ENCODE measurements at regions of chr10 and their contacts with region 1.

Region 1: DNA sequence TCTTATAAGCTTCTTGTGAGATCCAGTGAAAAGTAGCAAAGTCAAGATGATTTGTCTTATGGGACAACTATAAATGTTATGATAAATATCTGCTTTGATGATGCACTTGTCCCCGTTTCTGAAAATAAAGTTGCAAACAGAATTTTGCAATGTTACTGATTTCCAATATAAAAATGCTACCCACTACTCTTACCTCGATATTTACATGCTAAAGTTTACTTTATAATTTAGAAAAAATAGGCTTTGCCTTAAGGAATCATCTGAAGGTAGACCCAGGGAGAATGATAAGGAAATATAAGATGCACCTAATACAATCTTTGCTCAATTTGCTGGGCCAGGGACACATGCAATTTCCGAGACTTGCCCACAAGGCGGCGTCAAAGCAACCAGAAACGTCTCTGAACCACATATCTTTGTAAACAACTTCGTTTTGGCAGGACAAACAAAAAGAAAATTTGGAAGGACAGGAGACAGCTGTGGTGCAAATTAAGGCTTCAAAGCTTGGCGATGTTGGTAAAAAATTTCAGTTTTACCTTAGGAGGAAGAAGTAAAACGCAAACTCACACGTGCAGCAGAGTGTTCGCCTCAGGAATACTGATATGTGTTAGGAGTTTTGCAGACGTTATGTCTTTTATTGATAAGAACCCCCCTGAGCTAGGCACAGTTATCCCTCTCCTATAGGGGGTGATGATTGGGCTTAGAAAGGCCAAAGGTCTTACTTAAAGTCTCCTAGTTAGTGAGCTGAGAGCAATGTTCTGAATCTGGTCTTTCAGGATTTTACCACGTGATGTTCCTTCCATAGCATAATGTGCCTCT is 134.4 kb downstream of the PRKCQ start:
- ATAC-seq: peak in 3 of 8 experiments; percentile 39 to 45 (median 39)
- H3K4me3 ChIP-seq: no peak overlapping the region
- H3K27ac ChIP-seq: no peak overlapping the region
- H3K4me1 ChIP-seq: no peaks in the 10 kb centered on the region

Region 2: DNA sequence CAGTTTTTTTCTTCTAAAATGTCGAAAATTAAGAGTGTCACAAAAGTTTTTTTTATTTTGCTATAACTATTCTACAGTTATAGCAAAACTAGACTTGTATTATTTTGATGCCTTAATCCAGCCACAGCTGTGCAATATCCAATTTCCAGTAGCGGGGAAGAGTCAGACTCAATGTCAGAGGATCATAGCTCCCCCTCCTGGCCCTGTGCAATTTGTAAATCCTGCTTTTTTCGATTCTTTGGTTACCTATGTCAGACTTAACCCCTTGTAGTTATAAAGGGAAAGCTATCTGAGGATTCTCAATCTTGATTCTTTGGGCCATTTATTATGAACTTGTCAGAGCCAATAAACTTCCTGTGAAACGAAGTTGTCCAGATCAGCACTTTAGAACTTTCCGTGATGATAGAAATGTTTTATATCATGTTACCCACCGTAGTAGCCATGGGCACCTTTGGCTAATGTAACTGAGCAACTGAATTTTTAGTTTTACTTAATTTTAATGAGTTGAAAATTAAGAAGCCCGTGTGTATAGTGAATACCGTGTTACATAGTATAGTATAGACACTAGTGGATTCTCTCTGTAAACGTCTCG is 222.1 kb after region 1 on chr10:
- in situ Hi-C with region 1: loop called in 3 of 9 experiments (anchors 25 kb)
- ATAC-seq: peak; percentile 42 to 78 (median 58)
- H3K4me3 ChIP-seq: no peak overlapping the region
- H3K27ac ChIP-seq: no peak overlapping the region
- H3K4me1 ChIP-seq: peaks cover 2 to 6% of the 10 kb centered on the region in 2 donors

Region 3: GRCh38 chr10:6678211-6678803 is 232.6 kb after region 1 on chr10:
- in situ Hi-C with region 1: loop called in 4 of 9 experiments (anchors 25 kb)
- ATAC-seq: peak in 4 of 8 experiments; percentile 40 to 72 (median 60)
- H3K4me3 ChIP-seq: no peak overlapping the region
- H3K27ac ChIP-seq: no peak overlapping the region
- H3K4me1 ChIP-seq: no peaks in the 10 kb centered on the region

Region 4: DNA sequence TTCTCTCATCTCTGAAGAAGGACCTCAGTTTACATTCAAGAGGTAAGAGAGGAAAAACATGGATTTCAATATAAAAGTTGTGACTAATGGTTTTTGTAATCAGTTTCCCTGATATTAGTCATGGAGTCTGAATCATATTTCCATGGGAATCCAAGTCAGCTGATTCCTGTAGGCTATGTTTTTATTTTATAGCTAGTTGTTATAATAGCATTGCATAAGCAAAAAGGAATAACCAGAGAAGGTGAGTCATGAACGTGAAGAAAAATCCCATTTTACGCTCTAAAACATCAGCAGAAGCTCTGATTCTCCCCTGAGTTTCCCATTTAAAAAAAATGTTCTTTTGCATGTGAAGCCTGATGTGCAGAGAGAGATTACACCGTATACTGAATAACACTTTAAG is 665.9 kb after region 1 on chr10:
- in situ Hi-C with region 1: no loop called
- ATAC-seq: peak in 1 of 8 experiments; percentile 17
- H3K4me3 ChIP-seq: no peak overlapping the region
- H3K27ac ChIP-seq: no peak overlapping the region
- H3K4me1 ChIP-seq: no peaks in the 10 kb centered on the region